ENCODE measurements at regions of chr5 and their contacts with region 1.

Region 1: GRCh38 chr5:57298295-57298984 is 124.6 kb downstream of the GPBP1 start:
- DNase-seq: peak; percentile 53 to 68
- ATAC-seq: peak; percentile 86 to 93
- H3K4me3 ChIP-seq: peak overlapping the region in 1 of 4 donors; percentile 14
- H3K27ac ChIP-seq: no peak overlapping the region
- H3K4me1 ChIP-seq: peaks cover 2 to 6% of the 10 kb centered on the region in 2 donors
- H3K27me3 ChIP-seq: no peaks in the 10 kb centered on the region
- CTCF ChIP-seq: peak; percentile 62 to 84 (median 67)
- POLR2A ChIP-seq: no peak

Region 2: GRCh38 chr5:57754616-57755015 is 456.2 kb after region 1 on chr5:
- in situ Hi-C with region 1: loop called in 1 of 4 experiments (anchors 25 kb)
- intact Hi-C with region 1: no loop called
- DNase-seq: no peak
- ATAC-seq: no peak
- H3K4me3 ChIP-seq: no peak overlapping the region
- H3K27ac ChIP-seq: no peak overlapping the region
- H3K4me1 ChIP-seq: no peaks in the 10 kb centered on the region
- H3K27me3 ChIP-seq: no peaks in the 10 kb centered on the region
- CTCF ChIP-seq: no peak
- POLR2A ChIP-seq: no peak

Region 3: DNA sequence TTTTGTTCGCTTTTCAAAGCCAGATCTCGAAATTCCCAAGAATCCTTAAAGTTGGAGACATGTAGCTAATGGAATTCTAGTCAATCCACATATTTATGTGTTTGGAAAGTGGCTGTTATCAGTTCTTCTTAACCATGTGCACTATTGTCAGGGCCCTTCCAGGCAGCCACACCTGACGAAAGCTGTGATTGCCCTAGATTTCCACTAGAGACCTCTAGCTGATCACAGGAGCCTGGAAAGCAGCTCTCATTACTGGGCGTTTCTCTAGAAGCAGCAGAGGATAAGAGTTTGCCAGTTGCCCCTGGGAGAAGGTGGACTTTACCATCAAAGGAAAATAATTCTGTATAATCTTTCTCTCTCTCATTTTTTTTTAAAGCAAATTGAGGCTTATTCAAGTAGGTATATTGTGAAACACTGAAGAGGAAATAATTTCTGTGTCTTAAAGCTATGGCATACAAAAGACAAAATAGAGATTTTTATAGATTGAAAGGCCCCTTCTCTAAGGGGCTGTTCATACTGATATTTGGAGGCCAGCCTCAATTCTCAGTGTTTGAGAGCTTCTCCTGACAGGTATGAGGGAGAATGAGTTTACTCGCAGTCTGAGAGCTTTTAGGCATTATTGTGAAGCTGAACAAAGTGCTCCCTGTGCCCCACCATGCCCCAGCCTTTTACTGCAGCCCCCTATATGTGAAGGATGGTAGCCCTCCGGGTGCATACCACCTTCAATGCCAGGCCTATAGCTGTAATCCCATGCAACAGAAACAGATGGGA is 589.6 kb after region 1 on chr5:
- in situ Hi-C with region 1: loop called in 1 of 4 experiments (anchors 25 kb)
- intact Hi-C with region 1: no loop called
- DNase-seq: peak in 1 of 2 donors; percentile 13
- ATAC-seq: peak in 1 of 2 donors; percentile 85
- H3K4me3 ChIP-seq: no peak overlapping the region
- H3K27ac ChIP-seq: no peak overlapping the region
- H3K4me1 ChIP-seq: no peaks in the 10 kb centered on the region
- H3K27me3 ChIP-seq: no peaks in the 10 kb centered on the region
- CTCF ChIP-seq: peak; percentile 17 to 56 (median 31)
- POLR2A ChIP-seq: no peak

Region 4: GRCh38 chr5:58466939-58467338 is 1168.5 kb after region 1 on chr5:
- in situ Hi-C with region 1: loop called (anchors 5 to 10 kb)
- intact Hi-C with region 1: no loop called
- DNase-seq: no peak
- ATAC-seq: no peak
- H3K4me3 ChIP-seq: no peak overlapping the region
- H3K27ac ChIP-seq: no peak overlapping the region
- H3K4me1 ChIP-seq: no peaks in the 10 kb centered on the region
- H3K27me3 ChIP-seq: no peaks in the 10 kb centered on the region
- CTCF ChIP-seq: no peak
- POLR2A ChIP-seq: no peak

Measured in gastrocnemius medialis (tissue), 4 donors.